ENCODE measurements at regions of chr20 and their contacts with region 1.

Region 1: DNA sequence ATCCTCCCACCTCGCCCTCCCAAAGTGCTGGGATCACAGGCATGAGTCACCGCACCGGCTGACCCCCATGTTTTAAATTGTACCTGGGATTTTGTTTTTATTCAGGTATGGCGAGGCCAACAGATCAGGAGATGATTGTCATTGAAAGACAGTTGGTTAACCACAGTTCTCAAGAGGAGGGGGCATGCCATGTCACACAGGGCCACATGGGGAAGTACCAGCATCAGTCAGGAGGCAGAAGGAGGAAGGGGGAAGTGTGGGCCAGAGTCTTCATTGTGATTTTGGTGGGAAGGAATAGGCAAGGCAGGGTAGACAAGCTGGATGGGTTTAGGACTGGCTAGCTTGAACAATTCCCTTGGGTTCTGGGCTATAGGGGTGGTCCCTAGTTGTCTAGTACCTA is 9.9 kb upstream of the MMP9 start:
- DNase-seq: no peak
- ATAC-seq: peak in 3 of 4 donors; percentile 50 to 84 (median 65)
- H3K4me3 ChIP-seq: no peak overlapping the region
- H3K27ac ChIP-seq: peak overlapping the region in 1 of 12 donors; percentile 24
- H3K4me1 ChIP-seq: peaks cover 0 to 52% (median 0%) of the 10 kb centered on the region in 12 donors
- H3K27me3 ChIP-seq: peaks cover 0 to 61% (median 12%) of the 10 kb centered on the region in 9 donors
- CTCF ChIP-seq: no peak
- POLR2A ChIP-seq: no peak

Region 2: DNA sequence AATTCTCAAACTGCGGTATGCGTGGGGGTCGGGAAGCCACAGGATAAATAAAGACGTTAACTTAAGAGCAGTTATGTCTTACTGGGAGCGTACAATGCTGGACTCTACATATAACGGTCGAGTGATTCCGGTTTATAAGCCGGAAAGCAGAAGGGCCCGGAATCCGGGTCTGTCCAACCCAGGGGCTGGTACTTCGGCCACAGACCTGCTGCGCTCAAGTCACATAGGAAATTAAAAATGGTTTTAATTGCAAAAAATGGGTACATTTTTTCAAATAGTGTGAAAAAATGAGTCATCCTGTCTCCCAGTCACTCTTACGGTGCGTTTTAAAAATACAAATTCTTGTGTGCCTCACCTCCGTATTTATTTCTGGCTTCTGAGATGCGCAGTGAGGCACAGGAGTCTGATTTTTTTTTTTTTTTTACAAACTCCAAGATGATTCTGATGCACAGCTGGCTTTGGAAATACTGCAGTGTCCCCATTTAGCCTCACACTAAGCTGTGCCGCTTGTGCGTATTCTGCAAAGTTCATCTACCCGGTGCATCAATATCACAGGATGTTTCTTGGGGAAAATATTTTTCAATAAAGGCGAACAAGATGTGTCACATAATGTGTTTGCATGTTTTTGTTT is 63.2 kb before region 1 on chr20:
- intact Hi-C with region 1: no loop called
- DNase-seq: no peak
- ATAC-seq: peak; percentile 4 to 39 (median 24)
- H3K4me3 ChIP-seq: peak overlapping the region; percentile 32 to 100 (median 99)
- H3K27ac ChIP-seq: peak overlapping the region; percentile 79 to 100 (median 100)
- H3K4me1 ChIP-seq: peaks cover 0 to 28% (median 20%) of the 10 kb centered on the region in 12 donors
- H3K27me3 ChIP-seq: no peaks in the 10 kb centered on the region
- CTCF ChIP-seq: no peak
- POLR2A ChIP-seq: no peak

Region 3: GRCh38 chr20:46046588-46047320 is 48.0 kb after region 1 on chr20:
- intact Hi-C with region 1: loop called in 1 of 10 experiments (anchors 5 kb)
- DNase-seq: no peak
- ATAC-seq: no peak
- H3K4me3 ChIP-seq: no peak overlapping the region
- H3K27ac ChIP-seq: no peak overlapping the region
- H3K4me1 ChIP-seq: no peaks in the 10 kb centered on the region
- H3K27me3 ChIP-seq: peaks cover 0 to 70% (median 5%) of the 10 kb centered on the region in 9 donors
- CTCF ChIP-seq: no peak
- POLR2A ChIP-seq: no peak

Region 4: DNA sequence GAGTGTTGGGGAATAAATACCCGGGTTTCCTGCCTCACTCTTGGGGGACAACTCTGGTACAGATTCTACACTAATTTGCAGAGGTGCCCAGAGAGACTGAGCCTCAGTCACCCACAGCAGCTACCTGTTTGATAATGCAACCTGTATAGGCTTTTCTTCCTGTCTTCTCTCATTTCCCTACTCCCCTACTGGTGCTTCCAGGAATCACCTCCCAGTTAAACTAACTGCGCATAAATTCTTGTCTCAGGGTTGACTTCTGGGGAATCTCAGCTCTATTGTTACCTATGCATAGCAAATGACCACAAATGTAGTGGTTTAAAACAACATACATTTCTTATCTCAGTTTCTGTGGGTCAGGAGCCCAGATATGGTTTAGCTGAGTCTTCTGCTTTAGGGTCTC is 540.4 kb after region 1 on chr20:
- intact Hi-C with region 1: no loop called
- DNase-seq: no peak
- ATAC-seq: no peak
- H3K4me3 ChIP-seq: no peak overlapping the region
- H3K27ac ChIP-seq: no peak overlapping the region
- H3K4me1 ChIP-seq: no peaks in the 10 kb centered on the region
- H3K27me3 ChIP-seq: peaks cover 0 to 55% (median 3%) of the 10 kb centered on the region in 9 donors
- CTCF ChIP-seq: no peak
- POLR2A ChIP-seq: no peak

Measured in heart left ventricle (tissue), 16 donors.